HCT116 (cell line): ENCODE measurements at regions of chrX and their contacts with region 1.

Region 1: DNA sequence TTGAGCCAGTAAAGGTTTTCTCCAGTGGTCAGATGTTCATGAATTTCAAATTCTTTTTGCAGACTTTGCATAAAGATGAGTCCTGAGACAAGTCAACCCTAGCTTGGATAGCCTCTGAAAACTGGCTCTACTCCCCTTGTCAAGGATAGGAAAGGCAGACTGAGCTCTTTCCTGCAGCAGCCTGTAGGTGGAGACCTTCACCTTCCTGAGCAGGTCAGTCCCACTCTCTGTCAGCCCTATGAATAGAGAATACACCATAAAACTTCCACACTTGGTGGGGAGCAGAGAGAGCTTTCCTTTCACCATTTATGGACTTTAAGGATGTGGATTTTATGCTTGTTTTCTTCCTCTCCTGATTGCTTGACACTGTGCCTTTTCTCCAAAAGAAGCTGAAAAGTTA is 41.9 kb downstream of the PCDH19 start:
- DNase-seq: peak; percentile 4
- ATAC-seq: peak; percentile 86
- H3K4me3 ChIP-seq: no peak overlapping the region
- H3K27ac ChIP-seq: no peak overlapping the region
- H3K4me1 ChIP-seq: no peaks in the 10 kb centered on the region
- H3K27me3 ChIP-seq: peaks cover 3% of the 10 kb centered on the region; the same call in 1 of the 2 replicates
- CTCF ChIP-seq: peak; percentile 7 to 47 (median 44); a peak in 4 of 6 replicates
- POLR2A ChIP-seq: no peak
- RAD21 ChIP-seq: peak; percentile 38; the same call in 1 of the 2 replicates

Region 2: GRCh38 chrX:100379388-100379986 is 11.3 kb after region 1 on chrX:
- CTCF ChIA-PET with region 1: interaction called, 19 read pairs
- POLR2A ChIA-PET with region 1: no interaction called
- RAD21 ChIA-PET with region 1: no interaction called
- intact Hi-C with region 1: no loop called
- DNase-seq: peak; percentile 10
- ATAC-seq: peak; percentile 74
- H3K4me3 ChIP-seq: no peak overlapping the region
- H3K27ac ChIP-seq: no peak overlapping the region
- H3K4me1 ChIP-seq: no peaks in the 10 kb centered on the region
- H3K27me3 ChIP-seq: no peaks in the 10 kb centered on the region
- CTCF ChIP-seq: peak; percentile 15 to 63 (median 53); a peak in 4 of 6 replicates
- POLR2A ChIP-seq: no peak
- RAD21 ChIP-seq: peak; percentile 36

Region 3: GRCh38 chrX:100413229-100413628 is 45.1 kb after region 1 on chrX:
- CTCF ChIA-PET with region 1: interaction called, 42 read pairs
- POLR2A ChIA-PET with region 1: no interaction called
- RAD21 ChIA-PET with region 1: interaction called, 4 to 5 read pairs
- intact Hi-C with region 1: loop called (anchors 2 kb)
- DNase-seq: no peak
- ATAC-seq: peak; percentile 75
- H3K4me3 ChIP-seq: no peak overlapping the region
- H3K27ac ChIP-seq: no peak overlapping the region
- H3K4me1 ChIP-seq: no peaks in the 10 kb centered on the region; a peak in 1 of 4 replicates
- H3K27me3 ChIP-seq: no peaks in the 10 kb centered on the region
- CTCF ChIP-seq: peak; percentile 24 to 54 (median 26); a peak in 4 of 6 replicates
- POLR2A ChIP-seq: no peak
- RAD21 ChIP-seq: peak; percentile 64